B cell (primary cell): ENCODE measurements at regions of chr11 and their contacts with region 1.

Region 1: DNA sequence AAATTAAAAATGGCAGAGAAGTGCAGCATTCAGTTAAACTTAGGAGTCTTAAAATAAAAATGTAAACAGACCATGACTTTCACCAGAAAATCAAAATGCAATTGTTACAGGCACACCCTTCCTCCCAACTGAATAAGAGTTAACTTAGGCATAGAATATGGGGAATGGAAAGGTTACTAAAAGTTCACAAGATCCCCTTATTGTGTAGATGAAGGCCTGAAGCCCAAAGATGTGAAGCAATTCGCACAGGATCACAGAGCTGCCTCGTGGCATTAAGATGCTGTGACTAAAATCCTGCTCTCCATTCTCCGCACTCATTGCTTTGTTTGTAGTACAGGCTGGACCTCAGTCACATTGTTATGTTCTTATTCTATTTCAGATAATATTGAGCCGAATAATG is 4.0 kb downstream of the MS4A5 start:
- DNase-seq: no peak
- ATAC-seq: no peak
- H3K4me3 ChIP-seq: no peak overlapping the region
- H3K4me3 Mint-ChIP-seq: no peak overlapping the region
- H3K27ac ChIP-seq: no peak overlapping the region
- H3K27ac Mint-ChIP-seq: no peak overlapping the region
- H3K4me1 ChIP-seq: no peaks in the 10 kb centered on the region
- H3K4me1 Mint-ChIP-seq: peaks cover 19% of the 10 kb centered on the region
- H3K27me3 ChIP-seq: no peaks in the 10 kb centered on the region
- H3K27me3 Mint-ChIP-seq: no peaks in the 10 kb centered on the region
- CTCF ChIP-seq: no peak

Region 2: GRCh38 chr11:60396799-60397198 is 36.6 kb before region 1 on chr11:
- CTCF ChIA-PET with region 1: no interaction called
- POLR2A ChIA-PET with region 1: no interaction called
- intact Hi-C with region 1: loop called (anchors 5 kb)
- DNase-seq: peak; percentile 80
- ATAC-seq: peak; percentile 92
- H3K4me3 ChIP-seq: peak overlapping the region in 3 of 5 experiments; percentile 7 to 23 (median 16)
- H3K4me3 Mint-ChIP-seq: peak overlapping the region; percentile 70
- H3K27ac ChIP-seq: peak overlapping the region; percentile 74 to 79
- H3K27ac Mint-ChIP-seq: peak overlapping the region; percentile 86
- H3K4me1 ChIP-seq: peaks cover 32 to 41% of the 10 kb centered on the region in 2 donors
- H3K4me1 Mint-ChIP-seq: peaks cover 69% of the 10 kb centered on the region
- H3K27me3 ChIP-seq: no peaks in the 10 kb centered on the region
- H3K27me3 Mint-ChIP-seq: no peaks in the 10 kb centered on the region
- CTCF ChIP-seq: no peak

Region 3: GRCh38 chr11:60469723-60470122 is 36.3 kb after region 1 on chr11:
- CTCF ChIA-PET with region 1: interaction called, 4 read pairs
- POLR2A ChIA-PET with region 1: interaction called, 13 read pairs
- intact Hi-C with region 1: no loop called
- DNase-seq: no peak
- ATAC-seq: no peak
- H3K4me3 ChIP-seq: no peak overlapping the region
- H3K4me3 Mint-ChIP-seq: no peak overlapping the region
- H3K27ac ChIP-seq: peak overlapping the region in 1 of 2 donors; percentile 93
- H3K27ac Mint-ChIP-seq: peak overlapping the region; percentile 54
- H3K4me1 ChIP-seq: peaks cover 10 to 24% of the 10 kb centered on the region in 2 donors
- H3K4me1 Mint-ChIP-seq: peaks cover 65% of the 10 kb centered on the region
- H3K27me3 ChIP-seq: no peaks in the 10 kb centered on the region
- H3K27me3 Mint-ChIP-seq: no peaks in the 10 kb centered on the region
- CTCF ChIP-seq: no peak